Activated CD4-positive, alpha-beta memory T cell treated with anti-CD3 and anti-CD28 coated beads for 36 hours (primary cell): ENCODE measurements at regions of chr7 and their contacts with region 1.

Region 1: DNA sequence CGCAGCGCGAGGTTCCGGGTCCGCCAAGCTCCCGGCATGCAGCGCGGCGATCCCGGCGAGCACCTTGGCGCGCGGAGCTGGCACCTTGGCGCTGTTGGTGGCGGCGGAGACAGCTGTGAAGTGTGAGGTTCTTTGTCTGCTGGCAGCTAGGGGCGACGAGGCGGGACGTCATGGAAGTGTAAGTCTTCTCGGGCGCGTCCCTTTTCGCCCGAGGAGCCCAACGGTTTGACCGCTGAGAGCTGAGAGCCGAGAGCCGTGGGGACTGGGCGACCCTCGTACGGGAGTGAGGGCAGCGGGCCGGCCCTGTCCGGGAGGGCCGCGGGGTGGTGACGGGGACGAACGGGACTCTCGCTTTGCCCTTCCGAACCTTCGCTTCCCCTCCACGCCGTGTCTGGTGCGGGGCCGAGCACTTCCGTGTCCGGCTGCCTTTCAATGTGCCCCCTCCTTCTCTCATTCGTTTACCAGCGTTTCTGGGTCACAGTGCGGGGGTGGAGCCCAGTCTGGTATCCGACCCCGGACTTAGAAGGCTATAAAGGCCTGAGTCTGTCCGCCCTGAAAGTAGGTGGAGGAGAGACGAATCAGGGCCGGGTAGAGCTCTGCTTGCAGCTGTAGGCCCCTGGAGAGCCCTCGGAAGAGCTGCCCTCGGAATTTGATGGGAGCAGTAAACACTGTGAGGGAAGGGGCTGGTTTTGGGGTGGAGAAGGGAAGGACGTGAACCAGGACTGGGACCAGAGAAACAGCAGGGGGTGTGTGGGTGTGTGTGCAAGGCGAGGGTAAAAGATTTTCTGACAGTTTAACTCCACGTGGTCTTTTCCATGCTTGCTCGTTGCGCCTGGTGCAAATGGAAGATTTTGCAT is at the start of gene CRCP:
- DNase-seq: peak; percentile 88
- H3K4me3 Mint-ChIP-seq: peak within 1 kb of the TSS; percentile 97
- H3K27ac Mint-ChIP-seq: peak within 1 kb of the TSS; percentile 96
- H3K4me1 Mint-ChIP-seq: peaks cover 44% of the 10 kb centered on the region
- H3K27me3 Mint-ChIP-seq: no peaks in the 10 kb centered on the region
- total RNA-seq, gene CRCP: 19.3 to 19.6 TPM

Region 2: GRCh38 chr7:66075590-66076461 is 39.2 kb before region 1 on chr7 and contains the start of gene ASL:
- CTCF ChIA-PET with region 1: interaction called, 3 read pairs
- POLR2A ChIA-PET with region 1: interaction called, 6 read pairs
- intact Hi-C with region 1: loop called (anchors 2 kb)
- DNase-seq: peak; percentile 93
- H3K4me3 Mint-ChIP-seq: peak within 1 kb of the TSS; percentile 83
- H3K27ac Mint-ChIP-seq: no peak within 1 kb of the TSS
- H3K4me1 Mint-ChIP-seq: peaks cover 13% of the 10 kb centered on the region
- H3K27me3 Mint-ChIP-seq: no peaks in the 10 kb centered on the region
- total RNA-seq, gene ASL: 26.2 to 26.8 TPM

Region 3: GRCh38 chr7:66099616-66100474 is 15.2 kb before region 1 on chr7:
- CTCF ChIA-PET with region 1: no interaction called
- POLR2A ChIA-PET with region 1: interaction called, 3 read pairs
- intact Hi-C with region 1: loop called (anchors 2 kb)
- DNase-seq: peak; percentile 53
- H3K4me3 Mint-ChIP-seq: peak overlapping the region; percentile 65
- H3K27ac Mint-ChIP-seq: peak overlapping the region; percentile 79
- H3K4me1 Mint-ChIP-seq: peaks cover 11% of the 10 kb centered on the region
- H3K27me3 Mint-ChIP-seq: no peaks in the 10 kb centered on the region

Region 4: DNA sequence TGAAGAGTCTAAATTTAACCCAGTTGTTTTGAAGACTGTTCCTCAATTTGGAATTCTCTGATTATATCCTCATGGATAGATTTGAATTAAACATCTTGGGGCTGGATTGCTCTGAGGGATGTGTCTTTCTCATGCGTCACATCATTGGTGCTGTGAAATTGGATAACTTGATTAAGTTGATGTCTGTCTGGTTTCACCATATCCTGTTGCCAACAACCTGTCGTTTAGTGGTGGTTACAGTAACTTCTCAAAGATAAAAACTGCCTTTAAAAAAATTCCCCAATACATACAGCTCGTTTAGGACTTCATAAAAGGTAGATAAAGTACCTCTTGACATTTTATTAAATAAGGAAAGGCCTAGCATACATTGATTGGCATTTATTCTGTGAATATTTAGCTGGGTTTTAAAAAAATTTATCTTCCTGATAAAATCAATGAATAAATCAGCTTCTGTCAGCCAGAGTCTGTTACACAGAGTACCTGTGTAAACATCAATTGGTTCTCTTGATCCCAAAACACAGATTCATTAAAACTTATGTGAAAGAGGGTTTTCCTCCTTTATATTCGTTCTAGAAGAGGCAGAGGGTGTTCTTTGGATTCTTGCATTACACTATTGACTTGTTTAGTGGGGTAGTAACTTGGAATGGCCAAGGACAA is 10.2 kb after region 1 on chr7:
- CTCF ChIA-PET with region 1: interaction called, 3 read pairs
- POLR2A ChIA-PET with region 1: no interaction called
- intact Hi-C with region 1: loop called (anchors 1 kb)
- DNase-seq: no peak
- H3K4me3 Mint-ChIP-seq: no peak overlapping the region
- H3K27ac Mint-ChIP-seq: peak overlapping the region; percentile 47
- H3K4me1 Mint-ChIP-seq: peaks cover 43% of the 10 kb centered on the region
- H3K27me3 Mint-ChIP-seq: no peaks in the 10 kb centered on the region

Region 5: GRCh38 chr7:66204822-66205740 is 90.1 kb after region 1 on chr7 and contains the start of gene TPST1:
- CTCF ChIA-PET with region 1: no interaction called
- POLR2A ChIA-PET with region 1: no interaction called
- intact Hi-C with region 1: loop called (anchors 10 kb)
- DNase-seq: peak; percentile 84
- H3K4me3 Mint-ChIP-seq: peak within 1 kb of the TSS; percentile 81
- H3K27ac Mint-ChIP-seq: no peak within 1 kb of the TSS
- H3K4me1 Mint-ChIP-seq: peaks cover 28% of the 10 kb centered on the region
- H3K27me3 Mint-ChIP-seq: peaks cover 21% of the 10 kb centered on the region
- total RNA-seq, gene TPST1: 0.62 to 0.94 TPM